Stomach (tissue), 19 donors: ENCODE measurements at regions of chr15 and their contacts with region 1.

Region 1: GRCh38 chr15:27813139-27813538 is 286.0 kb downstream of the OCA2 start:
- DNase-seq: no peak
- H3K4me3 ChIP-seq: no peak overlapping the region
- H3K27ac ChIP-seq: no peak overlapping the region
- H3K4me1 ChIP-seq: no peaks in the 10 kb centered on the region
- H3K27me3 ChIP-seq: no peaks in the 10 kb centered on the region
- CTCF ChIP-seq: no peak
- EP300 ChIP-seq: no peak
- POLR2A ChIP-seq: no peak

Region 2: DNA sequence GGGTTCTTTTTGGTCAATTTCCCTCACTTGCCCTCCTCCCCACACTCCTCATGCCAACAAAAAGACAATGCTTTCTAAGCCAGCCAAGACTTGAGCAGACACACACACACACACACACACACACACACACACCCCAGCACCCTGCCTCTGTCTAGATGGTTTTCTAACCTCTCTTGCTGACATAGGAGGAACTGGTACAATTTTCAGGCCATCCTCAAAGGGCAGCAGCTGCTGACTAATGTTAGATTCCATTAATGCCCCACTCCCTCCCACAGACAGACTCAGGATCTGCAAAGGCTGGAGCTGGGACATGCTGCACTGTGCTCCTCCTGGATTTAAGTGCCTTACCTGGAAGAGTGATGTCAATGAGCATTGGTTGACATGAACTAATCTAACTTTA is 152.5 kb before region 1 on chr15:
- intact Hi-C with region 1: no loop called
- DNase-seq: no peak
- H3K4me3 ChIP-seq: no peak overlapping the region
- H3K27ac ChIP-seq: no peak overlapping the region
- H3K4me1 ChIP-seq: no peaks in the 10 kb centered on the region
- H3K27me3 ChIP-seq: no peaks in the 10 kb centered on the region
- CTCF ChIP-seq: no peak
- EP300 ChIP-seq: no peak
- POLR2A ChIP-seq: no peak

Region 3: GRCh38 chr15:27937851-27938250 is 124.7 kb after region 1 on chr15:
- intact Hi-C with region 1: loop called (anchors 10 kb)
- DNase-seq: no peak
- H3K4me3 ChIP-seq: no peak overlapping the region
- H3K27ac ChIP-seq: no peak overlapping the region
- H3K4me1 ChIP-seq: no peaks in the 10 kb centered on the region
- H3K27me3 ChIP-seq: peaks cover 0 to 3% (median 0%) of the 10 kb centered on the region in 3 donors
- CTCF ChIP-seq: no peak
- EP300 ChIP-seq: no peak
- POLR2A ChIP-seq: no peak